Right ventricle myocardium inferior (tissue), 1 donor: ENCODE measurements at regions of chr5 and their contacts with region 1.

Region 1: GRCh38 chr5:6712577-6713275 is 506 bp upstream of the TENT4A start:
- DNase-seq: peak; percentile 98
- ATAC-seq: peak; percentile 90

Region 2: GRCh38 chr5:6448622-6449464 is 263.9 kb before region 1 on chr5 and contains the start of gene UBE2QL1:
- intact Hi-C with region 1: loop called (anchors 10 kb)
- DNase-seq: no peak
- ATAC-seq: peak; percentile 43
- total RNA-seq, gene UBE2QL1: 21.9 TPM

Region 3: DNA sequence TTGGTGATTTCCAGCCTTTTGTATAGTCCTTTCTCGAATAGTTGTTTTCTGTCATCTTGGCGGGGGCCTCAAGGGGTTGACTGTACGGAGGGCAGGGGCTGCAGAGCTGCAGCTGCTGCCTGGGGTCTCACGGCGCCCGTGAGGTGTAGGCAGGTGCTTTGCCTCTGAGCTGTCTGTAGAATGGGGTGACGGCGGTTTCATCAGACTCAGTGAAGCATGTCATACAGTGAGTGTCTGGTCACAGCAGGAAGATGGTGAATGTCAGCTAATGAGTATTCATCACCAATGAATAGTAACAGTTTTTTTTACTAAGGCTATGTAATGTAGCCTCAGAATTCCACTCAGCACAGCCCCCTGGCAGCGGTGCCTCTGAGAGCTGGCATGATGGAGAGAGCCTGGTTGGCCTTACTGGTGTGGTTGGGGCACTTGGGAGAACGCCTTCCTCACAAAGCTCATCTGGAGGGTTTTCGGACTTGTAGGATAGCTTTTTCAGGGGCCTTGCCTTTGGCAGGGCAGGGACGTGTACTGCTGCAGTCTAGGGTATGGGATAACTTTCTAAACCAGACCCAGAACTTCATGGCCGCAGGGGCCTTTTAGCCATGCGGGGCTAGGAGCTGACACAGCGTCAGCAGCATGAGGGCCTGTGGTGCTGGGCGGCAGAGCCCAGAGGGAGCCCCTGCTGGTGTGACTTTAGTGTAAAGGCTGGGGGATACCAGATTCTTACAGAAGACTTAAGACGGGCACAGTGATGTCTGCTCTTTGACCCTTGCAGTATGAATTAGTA is 15.5 kb after region 1 on chr5:
- intact Hi-C with region 1: no loop called
- DNase-seq: no peak
- ATAC-seq: no peak